ENCODE measurements at regions of chrX and their contacts with region 1.

Region 1: GRCh38 chrX:138026211-138026610 is 460.3 kb downstream of the ZIC3 start:
- DNase-seq: no peak
- ATAC-seq: no peak
- H3K4me3 ChIP-seq: no peak overlapping the region
- H3K4me3 Mint-ChIP-seq: no peak overlapping the region
- H3K27ac ChIP-seq: no peak overlapping the region
- H3K27ac Mint-ChIP-seq: no peak overlapping the region
- H3K4me1 ChIP-seq: no peaks in the 10 kb centered on the region
- H3K4me1 Mint-ChIP-seq: no peaks in the 10 kb centered on the region
- H3K27me3 ChIP-seq: no peaks in the 10 kb centered on the region
- H3K27me3 Mint-ChIP-seq: peaks cover 0 to 11% (median 0%) of the 10 kb centered on the region in 5 donors

Region 2: GRCh38 chrX:136953867-136954787 is 1072.1 kb before region 1 on chrX:
- CTCF ChIA-PET with region 1: no interaction called
- POLR2A ChIA-PET with region 1: no interaction called
- intact Hi-C with region 1: loop called in 1 of 2 experiments (anchors 10 kb)
- DNase-seq: peak; percentile 7 to 51 (median 38)
- ATAC-seq: peak; percentile 69
- H3K4me3 ChIP-seq: no peak overlapping the region
- H3K4me3 Mint-ChIP-seq: no peak overlapping the region
- H3K27ac ChIP-seq: no peak overlapping the region
- H3K27ac Mint-ChIP-seq: no peak overlapping the region
- H3K4me1 ChIP-seq: no peaks in the 10 kb centered on the region
- H3K4me1 Mint-ChIP-seq: no peaks in the 10 kb centered on the region
- H3K27me3 ChIP-seq: no peaks in the 10 kb centered on the region
- H3K27me3 Mint-ChIP-seq: no peaks in the 10 kb centered on the region

Measured in naive thymus-derived CD4-positive, alpha-beta T cell (primary cell).